ACHN (cell line): ENCODE measurements at regions of chr7 and their contacts with region 1.

Region 1: DNA sequence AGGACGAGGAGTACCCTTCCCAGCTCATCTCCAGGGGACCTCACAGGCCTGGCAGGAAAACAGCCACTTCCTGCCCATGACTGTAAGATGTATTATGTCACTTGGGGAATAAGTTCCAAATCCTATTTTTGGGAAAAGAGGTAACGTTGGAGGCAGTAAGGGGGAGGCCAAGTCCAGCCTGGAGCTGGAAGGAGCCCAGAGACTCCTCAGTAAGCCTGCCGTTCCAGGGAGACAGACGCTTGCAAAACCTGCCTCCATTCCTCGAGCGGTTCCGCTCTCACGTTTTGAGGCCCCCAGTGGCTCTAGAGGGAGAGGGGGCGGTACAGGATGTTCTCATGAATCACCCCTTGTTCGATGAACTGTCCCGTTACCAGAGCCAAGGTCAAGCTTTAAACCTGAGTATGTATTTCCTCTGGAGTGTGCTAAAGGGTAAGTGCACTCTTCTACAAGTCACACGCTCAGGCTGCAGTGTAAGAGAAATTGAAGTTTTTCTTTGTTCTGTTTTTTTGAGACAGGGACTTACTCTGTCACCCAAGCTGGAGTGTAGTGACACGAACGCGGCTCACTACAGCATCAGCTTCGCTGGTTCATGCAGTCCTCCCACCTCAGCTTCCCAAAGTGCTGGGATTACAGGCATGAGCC is 45.5 kb upstream of the CYTH3 start:
- DNase-seq: peak; percentile 64

Region 2: DNA sequence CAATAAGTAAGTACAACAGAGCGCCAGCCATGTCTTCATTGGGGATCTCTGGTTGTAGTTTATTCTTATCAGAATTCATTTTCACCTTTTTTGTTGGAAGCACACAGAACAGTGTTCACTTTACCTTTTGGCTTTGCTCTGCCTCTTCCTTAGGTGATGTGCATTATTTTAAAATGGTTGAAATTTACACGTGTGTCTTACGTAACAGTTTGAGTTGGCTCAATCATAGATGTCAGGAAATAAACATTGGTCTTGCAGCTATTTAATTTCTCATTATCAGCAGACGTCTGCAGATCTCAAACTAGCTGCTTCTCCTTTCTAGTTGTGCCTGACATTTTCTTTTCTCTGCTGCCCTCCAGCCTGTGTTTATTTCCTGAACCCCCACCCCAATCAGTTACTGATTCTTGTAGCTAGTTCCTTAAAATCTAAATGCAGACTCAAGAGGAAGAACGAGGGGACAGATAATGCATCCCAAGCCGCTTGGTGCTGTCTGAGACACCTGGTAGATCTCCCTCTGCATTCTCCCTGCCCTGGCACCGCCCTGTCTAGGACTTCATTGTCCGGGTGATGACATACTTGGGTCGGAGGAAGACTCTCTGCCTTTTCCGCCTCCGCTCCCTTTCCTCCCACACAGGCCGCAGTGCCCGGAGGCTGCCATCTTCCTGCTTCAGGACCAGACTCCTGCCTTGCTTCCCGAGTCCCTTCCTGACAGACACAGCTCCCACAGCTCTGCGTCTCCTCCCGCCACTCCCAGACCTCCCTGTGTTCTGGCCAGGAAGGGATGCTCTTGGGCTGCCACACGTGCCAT is 178.5 kb before region 1 on chr7:
- in situ Hi-C with region 1: loop called (anchors 25 kb)
- DNase-seq: no peak

Region 3: DNA sequence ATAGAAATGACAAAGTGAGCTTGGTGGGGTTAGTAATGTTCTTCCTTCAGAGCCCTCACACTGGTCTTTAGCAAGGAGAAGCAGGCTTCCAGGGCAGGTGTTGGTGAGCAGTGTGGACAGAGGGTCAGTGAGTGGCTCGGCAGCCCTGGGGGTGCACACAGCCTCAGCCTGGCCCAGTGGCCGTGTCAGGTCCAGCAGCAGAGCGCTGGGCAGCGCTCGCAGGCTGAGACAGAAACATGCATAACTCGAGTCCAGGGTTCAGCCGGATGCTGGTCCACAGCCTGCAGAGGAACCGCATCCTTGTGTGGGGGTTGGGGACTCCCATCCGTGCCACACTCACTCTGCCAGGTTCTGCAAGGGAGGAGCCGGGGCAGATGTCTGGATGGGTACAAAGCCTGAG is 286.5 kb after region 1 on chr7:
- in situ Hi-C with region 1: no loop called
- DNase-seq: no peak

Region 4: DNA sequence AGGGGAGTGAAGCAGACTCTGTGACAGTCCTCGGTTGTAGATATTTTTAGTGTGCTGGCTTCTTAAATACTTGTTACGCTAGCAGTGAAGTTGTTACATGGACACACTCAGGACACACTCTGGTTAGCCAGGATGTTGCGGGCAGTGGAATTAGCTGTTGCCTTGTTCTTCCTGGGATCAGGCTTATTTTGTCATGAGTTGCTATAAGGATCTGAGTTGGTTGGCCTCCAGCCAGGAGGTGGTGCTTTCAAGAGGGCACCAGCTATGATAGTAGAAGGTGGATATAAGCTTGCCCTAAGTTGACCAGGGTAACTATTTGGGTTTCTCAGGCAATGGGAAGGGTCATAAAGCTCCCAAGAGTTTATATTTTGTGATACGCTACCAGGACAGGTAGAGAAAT is 714.3 kb after region 1 on chr7:
- in situ Hi-C with region 1: no loop called
- DNase-seq: no peak